CD8-positive, alpha-beta T cell (primary cell): ENCODE measurements at regions of chr5 and their contacts with region 1.

Region 1: GRCh38 chr5:100803397-100803796 is 99.7 kb downstream of the ST8SIA4 start:
- DNase-seq: no peak
- ATAC-seq: no peak
- H3K4me3 ChIP-seq: no peak overlapping the region
- H3K4me3 Mint-ChIP-seq: no peak overlapping the region
- H3K27ac ChIP-seq: no peak overlapping the region
- H3K27ac Mint-ChIP-seq: no peak overlapping the region
- H3K4me1 ChIP-seq: no peaks in the 10 kb centered on the region
- H3K4me1 Mint-ChIP-seq: no peaks in the 10 kb centered on the region
- H3K27me3 ChIP-seq: no peaks in the 10 kb centered on the region
- H3K27me3 Mint-ChIP-seq: no peaks in the 10 kb centered on the region
- CTCF ChIP-seq: no peak

Region 2: GRCh38 chr5:100772548-100772947 is 30.8 kb before region 1 on chr5:
- CTCF ChIA-PET with region 1: interaction called, 3 read pairs
- POLR2A ChIA-PET with region 1: no interaction called
- intact Hi-C with region 1: loop called in 1 of 2 experiments (anchors 5 kb)
- DNase-seq: no peak
- ATAC-seq: no peak
- H3K4me3 ChIP-seq: no peak overlapping the region
- H3K4me3 Mint-ChIP-seq: no peak overlapping the region
- H3K27ac ChIP-seq: no peak overlapping the region
- H3K27ac Mint-ChIP-seq: no peak overlapping the region
- H3K4me1 ChIP-seq: peaks cover 2% of the 10 kb centered on the region
- H3K4me1 Mint-ChIP-seq: peaks cover 2% of the 10 kb centered on the region
- H3K27me3 ChIP-seq: no peaks in the 10 kb centered on the region
- H3K27me3 Mint-ChIP-seq: no peaks in the 10 kb centered on the region
- CTCF ChIP-seq: no peak